Activated T-helper 2 cell treated with anti-CD3 and anti-CD28 coated beads, Interferon-gamma antibody, Interleukin-2, Interleukin-4, amounts not matched to agents 10 μg/mL and 5 μg/mL and 100 μg/mL, durations not matched to agents 14 hours and 24 hours and 36 hours (primary cell): ENCODE measurements at regions of chr4 and their contacts with region 1.

Region 1: GRCh38 chr4:7960790-7961655 is 21.4 kb upstream of the AFAP1 start:
- DNase-seq: peak; percentile 59
- H3K4me3 Mint-ChIP-seq: peak overlapping the region; percentile 20
- H3K27ac Mint-ChIP-seq: peak overlapping the region; percentile 94
- H3K4me1 Mint-ChIP-seq: peaks cover 53% of the 10 kb centered on the region
- H3K27me3 Mint-ChIP-seq: no peaks in the 10 kb centered on the region

Region 2: DNA sequence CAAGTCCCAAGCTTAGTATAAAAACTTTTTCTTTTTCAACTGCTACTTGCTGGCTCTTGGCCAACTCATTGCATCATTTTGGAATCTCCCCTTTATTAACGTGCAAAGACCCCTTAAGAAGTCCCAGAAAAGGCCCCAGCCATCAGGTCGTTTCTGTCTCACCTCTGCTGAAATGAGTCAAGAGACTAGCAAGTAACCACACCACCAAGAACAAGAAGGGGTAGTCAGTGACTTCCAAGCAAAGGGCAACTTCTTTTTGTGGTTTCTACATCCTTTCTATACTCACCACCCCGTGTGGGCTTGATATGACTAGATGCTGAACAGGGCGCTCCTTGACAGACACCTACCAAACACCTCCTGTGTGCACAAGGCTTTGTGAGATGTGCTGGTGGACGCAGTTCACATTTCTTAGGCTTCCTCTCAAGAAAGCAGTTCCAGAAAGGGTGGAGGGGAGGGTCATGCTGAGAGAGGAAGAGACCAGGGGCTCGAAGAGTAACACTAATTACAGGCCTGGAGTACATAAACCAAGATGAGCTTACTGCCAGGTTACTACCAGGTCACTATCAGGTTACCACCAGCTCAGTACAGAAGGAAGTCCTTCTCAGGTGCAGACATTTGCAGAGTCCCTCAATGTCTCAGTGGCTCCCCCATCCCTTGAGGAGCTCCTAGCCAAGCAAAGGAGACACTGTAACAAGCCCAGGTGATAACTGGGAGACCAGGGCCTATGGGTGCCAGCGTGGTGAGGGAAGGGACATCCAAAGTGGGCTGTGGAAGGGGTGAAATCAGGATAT is 1780.0 kb before region 1 on chr4:
- intact Hi-C with region 1: loop called (anchors 10 kb)
- DNase-seq: peak; percentile 70
- H3K4me3 Mint-ChIP-seq: peak overlapping the region; percentile 37
- H3K27ac Mint-ChIP-seq: peak overlapping the region; percentile 93
- H3K4me1 Mint-ChIP-seq: peaks cover 73% of the 10 kb centered on the region
- H3K27me3 Mint-ChIP-seq: no peaks in the 10 kb centered on the region

Region 3: DNA sequence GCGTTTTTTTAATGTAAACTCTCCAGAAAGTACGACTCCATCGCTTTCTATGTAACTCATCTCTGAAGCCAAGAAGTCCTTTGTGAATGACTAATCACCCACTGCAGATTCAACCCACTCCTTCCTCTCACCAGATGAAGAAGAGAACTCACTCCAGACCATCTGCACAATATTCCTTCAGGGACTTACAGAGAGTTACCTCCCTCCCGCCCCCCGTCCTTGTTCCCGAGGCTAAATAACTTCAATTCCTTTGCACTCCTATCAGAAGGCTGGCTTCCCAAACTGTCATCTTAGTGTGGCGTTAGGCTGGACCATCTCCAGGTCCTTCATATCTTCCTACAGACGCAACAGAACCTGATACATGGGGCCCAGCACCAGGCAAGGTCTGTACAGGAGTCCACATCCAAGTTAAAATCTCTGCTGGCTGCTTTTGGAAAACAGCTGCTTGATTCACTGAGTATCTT is 103.8 kb before region 1 on chr4:
- intact Hi-C with region 1: loop called (anchors 1 kb)
- DNase-seq: no peak
- H3K4me3 Mint-ChIP-seq: peak overlapping the region; percentile 76
- H3K27ac Mint-ChIP-seq: peak overlapping the region; percentile 85
- H3K4me1 Mint-ChIP-seq: peaks cover 61% of the 10 kb centered on the region
- H3K27me3 Mint-ChIP-seq: no peaks in the 10 kb centered on the region

Region 4: DNA sequence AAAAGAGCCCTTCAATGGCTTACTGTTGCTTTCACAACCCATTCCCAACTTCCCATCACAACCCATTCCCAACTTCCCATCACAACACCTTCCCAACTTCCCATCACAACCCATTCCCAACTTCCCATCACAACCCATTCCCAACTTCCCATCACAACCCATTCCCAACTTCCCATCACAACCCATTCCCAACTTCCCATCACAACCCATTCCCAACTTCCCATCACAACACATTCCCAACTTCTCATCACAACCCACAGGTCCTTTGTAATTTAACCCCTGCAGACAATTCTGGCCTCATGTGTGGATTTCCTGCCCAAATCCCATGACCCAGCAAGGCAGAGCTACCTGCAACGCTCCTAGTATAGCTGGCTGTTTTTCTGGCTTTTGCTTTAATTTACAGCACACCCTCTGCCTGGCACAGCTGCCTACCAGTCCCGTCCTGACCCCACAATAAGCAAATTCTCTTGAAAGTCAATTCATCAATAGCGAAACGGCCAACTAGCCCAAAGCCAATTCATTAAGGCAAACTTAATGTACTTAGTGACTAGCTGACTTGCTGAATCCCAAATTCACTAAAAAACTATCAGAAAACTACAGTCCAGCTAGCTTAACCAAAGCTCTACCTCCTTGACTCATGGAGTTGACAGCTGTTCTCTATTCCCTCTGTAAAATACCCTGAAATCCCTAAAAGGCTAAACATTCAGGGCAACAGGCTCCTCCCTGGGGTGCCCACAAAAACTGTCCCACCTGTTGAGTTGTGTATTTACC is 96.9 kb before region 1 on chr4:
- intact Hi-C with region 1: loop called (anchors 2 kb)
- DNase-seq: no peak
- H3K4me3 Mint-ChIP-seq: no peak overlapping the region
- H3K27ac Mint-ChIP-seq: peak overlapping the region; percentile 64
- H3K4me1 Mint-ChIP-seq: peaks cover 28% of the 10 kb centered on the region
- H3K27me3 Mint-ChIP-seq: no peaks in the 10 kb centered on the region

Region 5: DNA sequence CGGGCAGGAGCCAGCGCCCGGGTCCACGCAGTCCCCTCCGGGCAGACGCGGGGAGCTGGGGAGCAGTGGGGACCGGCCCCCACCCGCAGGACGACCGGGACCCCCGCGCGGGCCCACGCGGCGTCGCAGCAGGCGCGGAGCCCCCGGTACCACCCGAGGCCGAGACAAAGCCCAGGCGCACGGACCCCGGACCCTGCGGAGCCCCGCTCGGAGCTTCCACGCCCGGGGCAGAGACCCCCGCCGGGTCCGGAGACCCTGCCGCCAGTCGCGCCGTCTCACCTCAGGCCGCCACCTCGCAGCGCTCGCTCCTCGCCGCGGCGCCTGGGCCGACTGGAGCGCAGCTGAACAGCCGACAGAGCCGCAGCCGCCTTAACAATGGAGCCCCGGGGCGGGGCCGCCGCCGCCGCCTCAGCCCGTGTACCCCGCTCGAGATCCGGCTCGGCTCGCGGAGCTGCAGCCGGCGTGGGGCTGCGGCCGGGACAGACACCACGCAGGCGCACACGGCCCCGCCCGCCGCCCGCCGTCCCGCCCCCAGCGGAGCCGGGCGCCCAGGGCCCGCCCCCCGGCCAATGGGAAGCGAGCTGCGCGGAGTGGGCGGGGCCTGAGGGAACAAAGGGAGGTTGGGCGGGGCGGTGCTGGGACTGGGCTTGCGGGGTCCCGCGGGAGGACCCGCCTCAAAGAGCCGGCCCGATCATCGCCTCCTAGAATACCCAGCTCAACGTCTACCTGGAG is 21.5 kb before region 1 on chr4 and contains the start of gene AFAP1:
- intact Hi-C with region 1: loop called (anchors 1 kb)
- DNase-seq: peak; percentile 84
- H3K4me3 Mint-ChIP-seq: peak within 1 kb of the TSS; percentile 57
- H3K27ac Mint-ChIP-seq: no peak within 1 kb of the TSS
- H3K4me1 Mint-ChIP-seq: peaks cover 25% of the 10 kb centered on the region
- H3K27me3 Mint-ChIP-seq: peaks cover 8% of the 10 kb centered on the region
- total RNA-seq, gene AFAP1: 53.7 and 57.6 TPM in 2 replicates

Region 6: GRCh38 chr4:7947927-7948326 is 13.1 kb before region 1 on chr4:
- intact Hi-C with region 1: loop called (anchors 1 kb)
- DNase-seq: no peak
- H3K4me3 Mint-ChIP-seq: no peak overlapping the region
- H3K27ac Mint-ChIP-seq: peak overlapping the region; percentile 43
- H3K4me1 Mint-ChIP-seq: peaks cover 10% of the 10 kb centered on the region
- H3K27me3 Mint-ChIP-seq: no peaks in the 10 kb centered on the region